Activated B cell treated with CpG ODN at 0.5 μM for 24 hours (primary cell): ENCODE measurements at regions of chr16 and their contacts with region 1.

Region 1: GRCh38 chr16:56874800-56875199 is 9.8 kb downstream of the SLC12A3 start:
- DNase-seq: no peak
- ATAC-seq: no peak
- H3K4me3 Mint-ChIP-seq: no peak overlapping the region
- H3K27ac Mint-ChIP-seq: peak overlapping the region; percentile 37
- H3K4me1 Mint-ChIP-seq: peaks cover 39% of the 10 kb centered on the region
- H3K27me3 Mint-ChIP-seq: no peaks in the 10 kb centered on the region
- CTCF ChIP-seq: no peak

Region 2: GRCh38 chr16:56911771-56912571 is 37.2 kb after region 1 on chr16:
- CTCF ChIA-PET with region 1: no interaction called
- POLR2A ChIA-PET with region 1: interaction called, 34 read pairs
- intact Hi-C with region 1: loop called (anchors 2 kb)
- DNase-seq: peak; percentile 70
- ATAC-seq: peak; percentile 81
- H3K4me3 Mint-ChIP-seq: peak overlapping the region; percentile 64
- H3K27ac Mint-ChIP-seq: peak overlapping the region; percentile 96
- H3K4me1 Mint-ChIP-seq: peaks cover 79% of the 10 kb centered on the region
- H3K27me3 Mint-ChIP-seq: no peaks in the 10 kb centered on the region
- CTCF ChIP-seq: no peak

Region 3: GRCh38 chr16:56938422-56939156 is 63.8 kb after region 1 on chr16:
- CTCF ChIA-PET with region 1: interaction called, 57 read pairs
- POLR2A ChIA-PET with region 1: interaction called, 444 read pairs
- intact Hi-C with region 1: no loop called
- DNase-seq: no peak
- ATAC-seq: no peak
- H3K4me3 Mint-ChIP-seq: peak overlapping the region; percentile 81
- H3K27ac Mint-ChIP-seq: peak overlapping the region; percentile 83
- H3K4me1 Mint-ChIP-seq: peaks cover 87% of the 10 kb centered on the region
- H3K27me3 Mint-ChIP-seq: no peaks in the 10 kb centered on the region
- CTCF ChIP-seq: no peak